PC-3 (cell line): ENCODE measurements at regions of chr1 and their contacts with region 1.

Region 1: DNA sequence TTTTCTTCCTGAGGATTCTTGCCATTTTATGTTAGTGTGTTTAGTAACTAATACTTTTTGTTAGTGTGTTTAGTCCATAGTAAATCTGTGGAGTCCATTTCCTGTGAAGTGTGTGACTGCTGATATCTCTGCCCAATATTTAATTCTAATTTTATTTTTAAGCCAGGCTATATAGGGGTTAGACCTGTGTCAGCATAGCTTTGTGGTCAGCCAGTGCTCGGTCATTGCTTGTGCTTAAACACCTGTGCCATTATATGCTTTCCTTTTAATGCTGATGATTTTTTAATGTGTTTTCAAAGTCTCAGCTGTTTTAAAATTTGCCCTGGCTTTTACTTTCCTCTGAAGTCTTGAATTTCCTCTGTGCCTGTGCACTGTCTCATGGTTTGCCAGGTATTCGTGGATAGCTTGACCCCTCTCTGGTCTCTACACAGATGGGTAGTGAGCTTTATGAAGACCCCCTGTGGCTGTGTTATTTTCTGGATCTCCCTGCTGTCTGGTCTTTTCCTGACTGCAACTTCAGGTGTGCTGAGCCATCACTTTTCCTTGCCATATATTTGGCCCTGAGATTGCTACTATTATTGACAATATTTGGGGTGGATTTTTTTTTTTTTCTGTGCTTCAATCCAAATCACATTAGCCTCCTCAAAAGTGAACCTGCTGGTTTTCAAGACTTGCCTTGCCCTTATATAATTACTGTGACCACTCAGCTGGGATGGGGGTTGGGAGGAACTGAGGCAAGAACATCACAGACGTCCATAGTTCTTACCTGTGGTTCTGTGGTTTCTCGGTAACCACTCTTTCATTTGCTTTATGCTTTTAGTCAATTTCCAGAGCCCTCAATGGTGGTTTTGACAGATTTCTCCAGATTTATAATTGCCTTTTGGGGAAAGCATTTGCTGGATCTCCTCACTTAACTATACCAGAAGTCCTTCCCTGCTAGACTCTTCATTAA is 59.6 kb downstream of the RPS6KC1 start:
- DNase-seq: no peak
- ATAC-seq: peak; percentile 59
- H3K4me3 ChIP-seq: no peak overlapping the region
- H3K27ac ChIP-seq: no peak overlapping the region
- H3K4me1 ChIP-seq: no peaks in the 10 kb centered on the region
- H3K27me3 ChIP-seq: no peaks in the 10 kb centered on the region
- CTCF ChIP-seq: no peak

Region 2: DNA sequence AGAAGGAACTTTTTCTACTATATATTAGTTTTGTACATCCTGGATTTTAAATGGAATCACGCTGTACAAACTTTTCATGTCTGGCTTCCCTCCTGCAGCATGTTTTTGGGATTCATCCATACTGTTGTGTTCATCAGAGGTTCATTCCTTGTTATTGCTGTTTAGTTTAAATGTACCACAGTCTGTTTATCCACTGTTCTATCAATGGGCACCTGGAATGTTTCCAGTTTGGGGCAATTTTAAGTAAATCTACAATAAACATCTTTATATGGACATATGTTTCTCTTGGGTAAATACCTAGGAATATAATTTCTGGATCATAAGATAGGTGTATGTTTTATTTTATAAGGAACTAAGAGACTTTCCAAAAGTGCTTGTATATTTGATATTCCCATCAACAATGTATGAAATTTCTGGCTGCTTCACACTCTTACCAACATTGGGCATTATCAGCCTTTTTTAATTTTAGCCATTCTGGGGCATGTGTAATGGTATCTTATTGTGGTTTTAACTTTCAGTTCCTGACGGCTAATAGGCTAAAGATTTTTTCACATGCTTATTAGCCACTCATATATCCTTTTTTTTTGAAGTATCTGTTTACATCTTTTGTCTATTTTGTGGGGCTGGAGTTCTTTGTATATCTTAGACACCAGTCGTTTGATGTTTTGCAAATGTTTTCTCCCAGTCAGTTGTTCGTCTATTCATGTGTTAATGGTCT is 10.8 kb before region 1 on chr1:
- CTCF ChIA-PET with region 1: no interaction called
- POLR2A ChIA-PET with region 1: no interaction called
- intact Hi-C with region 1: loop called (anchors 1 kb)
- DNase-seq: no peak
- ATAC-seq: no peak
- H3K4me3 ChIP-seq: no peak overlapping the region
- H3K27ac ChIP-seq: no peak overlapping the region
- H3K4me1 ChIP-seq: peaks cover 5% of the 10 kb centered on the region; the same call in 1 of the 2 replicates
- H3K27me3 ChIP-seq: no peaks in the 10 kb centered on the region
- CTCF ChIP-seq: no peak

Region 3: DNA sequence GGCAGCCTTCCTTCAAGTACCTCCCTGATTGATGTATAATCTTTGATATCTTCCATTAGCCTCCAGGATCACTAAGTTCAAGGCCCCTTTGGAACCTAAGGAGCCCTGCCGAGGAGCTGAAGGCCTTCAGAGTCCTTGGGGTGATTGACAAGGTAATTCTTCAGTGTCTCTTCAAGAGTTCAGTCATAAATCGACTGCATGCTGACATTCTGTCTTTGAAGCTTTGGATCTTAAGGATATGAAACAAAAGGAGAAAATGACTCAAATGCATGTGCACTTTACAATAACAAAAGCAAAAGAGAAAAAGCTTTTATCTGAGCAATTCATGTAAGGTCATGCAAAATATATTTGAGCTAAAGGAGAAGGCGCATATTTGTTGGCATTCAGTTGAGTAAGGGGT is 65.7 kb after region 1 on chr1:
- CTCF ChIA-PET with region 1: no interaction called
- POLR2A ChIA-PET with region 1: no interaction called
- intact Hi-C with region 1: no loop called
- DNase-seq: no peak
- ATAC-seq: no peak
- H3K4me3 ChIP-seq: no peak overlapping the region
- H3K27ac ChIP-seq: no peak overlapping the region
- H3K4me1 ChIP-seq: no peaks in the 10 kb centered on the region
- H3K27me3 ChIP-seq: 0 out of 2 replicates have a peak, but pooled peaks cover 4% of the 10 kb centered on the region
- CTCF ChIP-seq: no peak

Region 4: DNA sequence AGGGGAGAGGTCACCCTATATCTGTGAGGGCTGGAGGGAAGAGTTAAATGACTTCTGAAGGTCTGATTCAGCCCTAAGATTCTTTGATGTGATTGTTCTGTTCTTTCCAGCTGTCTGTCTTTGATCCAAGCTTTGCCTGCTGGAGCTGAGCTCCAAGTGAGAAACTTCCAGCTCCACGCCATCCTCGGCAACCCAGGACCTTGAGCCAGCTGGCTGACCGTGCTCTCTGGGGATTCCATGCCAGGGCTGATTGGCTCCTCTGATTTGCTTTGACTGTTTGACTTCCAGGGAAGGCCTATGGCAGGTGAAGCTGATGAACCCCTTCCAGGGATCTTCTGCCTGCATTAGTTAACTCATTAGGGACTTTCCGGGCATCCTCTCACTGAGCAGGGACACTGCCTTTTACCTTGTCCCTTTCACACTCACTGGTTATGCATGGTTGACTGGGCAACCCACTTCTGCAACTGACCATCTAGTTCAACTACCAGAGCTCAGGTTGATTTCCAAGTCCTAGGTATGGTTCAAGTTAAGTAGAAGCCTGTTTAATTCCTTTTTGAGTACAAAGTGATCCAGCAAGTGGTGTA is 346.6 kb after region 1 on chr1:
- CTCF ChIA-PET with region 1: no interaction called
- POLR2A ChIA-PET with region 1: no interaction called
- intact Hi-C with region 1: no loop called
- DNase-seq: no peak
- ATAC-seq: no peak
- H3K4me3 ChIP-seq: no peak overlapping the region
- H3K27ac ChIP-seq: no peak overlapping the region
- H3K4me1 ChIP-seq: no peaks in the 10 kb centered on the region
- H3K27me3 ChIP-seq: peaks cover 42% of the 10 kb centered on the region
- CTCF ChIP-seq: no peak

Region 5: GRCh38 chr1:214700365-214700764 is 1589.7 kb after region 1 on chr1:
- CTCF ChIA-PET with region 1: no interaction called
- POLR2A ChIA-PET with region 1: no interaction called
- intact Hi-C with region 1: no loop called
- DNase-seq: no peak
- ATAC-seq: no peak
- H3K4me3 ChIP-seq: no peak overlapping the region
- H3K27ac ChIP-seq: no peak overlapping the region
- H3K4me1 ChIP-seq: peaks cover 5% of the 10 kb centered on the region; the same call in 1 of the 2 replicates
- H3K27me3 ChIP-seq: no peaks in the 10 kb centered on the region
- CTCF ChIP-seq: no peak